OCI-LY7 (cell line): ENCODE measurements at regions of chr3 and their contacts with region 1.

Region 1: DNA sequence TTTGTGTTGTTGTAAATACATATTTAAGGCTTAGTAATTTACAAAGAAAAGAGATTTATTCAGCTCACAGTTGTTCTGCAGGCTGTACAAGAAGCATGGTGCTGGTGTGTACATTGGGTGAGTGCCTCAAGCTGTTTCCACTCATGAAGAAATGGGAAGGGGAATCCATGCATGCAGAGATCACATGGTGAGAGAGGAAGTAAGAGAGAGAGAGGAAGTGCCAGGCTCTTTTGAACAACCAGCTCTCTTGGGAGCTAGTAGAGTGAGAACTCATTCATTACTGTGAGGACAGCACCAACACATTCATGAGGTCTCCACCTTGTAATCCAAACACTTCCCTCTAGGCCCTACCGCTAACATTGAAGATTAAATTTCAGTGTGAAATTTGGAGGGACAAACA is 909.2 kb downstream of the NSUN3 start:
- DNase-seq: no peak
- H3K4me3 ChIP-seq: no peak overlapping the region
- H3K27ac ChIP-seq: no peak overlapping the region
- H3K4me1 ChIP-seq: no peaks in the 10 kb centered on the region
- CTCF ChIP-seq: no peak

Region 2: DNA sequence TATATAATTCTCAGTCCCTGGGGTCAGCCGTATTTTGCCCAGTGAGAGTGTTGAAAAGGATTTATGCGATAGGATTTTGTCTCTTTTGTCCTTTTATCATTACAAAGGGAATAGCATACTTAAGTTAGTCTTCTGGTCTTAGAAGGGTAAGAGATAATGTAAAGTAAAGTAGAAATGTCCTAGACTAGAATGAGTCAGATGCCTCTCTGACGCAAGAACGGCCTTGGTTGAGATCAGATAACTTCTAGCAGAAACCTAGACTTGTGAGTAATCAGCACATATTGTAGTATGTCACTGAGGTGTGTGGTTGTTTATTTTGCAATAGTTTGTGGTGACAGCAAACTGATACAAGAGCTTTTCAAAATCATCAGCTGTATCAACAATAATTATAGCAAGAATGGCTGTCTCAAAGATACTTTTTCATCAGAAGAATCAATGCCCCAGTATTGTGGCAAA is 43.1 kb before region 1 on chr3:
- CTCF ChIA-PET with region 1: no interaction called
- POLR2A ChIA-PET with region 1: no interaction called
- intact Hi-C with region 1: loop called (anchors 5 kb)
- DNase-seq: no peak
- H3K4me3 ChIP-seq: no peak overlapping the region
- H3K27ac ChIP-seq: no peak overlapping the region
- H3K4me1 ChIP-seq: no peaks in the 10 kb centered on the region
- CTCF ChIP-seq: no peak

Region 3: GRCh38 chr3:94990952-94991705 is 19.1 kb after region 1 on chr3:
- CTCF ChIA-PET with region 1: no interaction called
- POLR2A ChIA-PET with region 1: no interaction called
- intact Hi-C with region 1: no loop called
- DNase-seq: no peak
- H3K4me3 ChIP-seq: no peak overlapping the region
- H3K27ac ChIP-seq: no peak overlapping the region
- H3K4me1 ChIP-seq: no peaks in the 10 kb centered on the region
- CTCF ChIP-seq: no peak